ENCODE measurements at regions of chr15 and their contacts with region 1.

Region 1: DNA sequence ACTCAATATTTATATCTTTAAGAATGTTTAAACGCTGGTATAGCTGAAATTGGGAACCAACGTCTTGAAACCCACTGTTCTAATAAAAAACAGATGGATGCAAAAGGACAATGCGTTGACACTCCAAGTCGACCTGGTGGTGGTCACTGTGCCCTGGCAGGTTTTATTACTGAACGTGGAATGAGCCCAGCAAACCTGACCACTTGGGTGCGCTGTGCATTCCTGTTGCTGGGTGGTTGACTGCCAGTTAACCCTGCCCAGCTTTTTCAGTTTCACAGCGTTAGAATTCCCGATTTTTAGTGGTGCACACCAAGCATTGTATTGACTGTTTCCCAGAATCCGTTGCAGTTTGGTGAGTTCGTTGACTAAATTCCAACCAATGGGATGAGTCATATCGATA is 384.4 kb downstream of the OCA2 start:
- DNase-seq: no peak
- H3K4me3 ChIP-seq: no peak overlapping the region
- H3K27ac ChIP-seq: no peak overlapping the region
- H3K4me1 ChIP-seq: no peaks in the 10 kb centered on the region
- H3K27me3 ChIP-seq: no peaks in the 10 kb centered on the region
- CTCF ChIP-seq: no peak
- EP300 ChIP-seq: no peak
- POLR2A ChIP-seq: no peak

Region 2: DNA sequence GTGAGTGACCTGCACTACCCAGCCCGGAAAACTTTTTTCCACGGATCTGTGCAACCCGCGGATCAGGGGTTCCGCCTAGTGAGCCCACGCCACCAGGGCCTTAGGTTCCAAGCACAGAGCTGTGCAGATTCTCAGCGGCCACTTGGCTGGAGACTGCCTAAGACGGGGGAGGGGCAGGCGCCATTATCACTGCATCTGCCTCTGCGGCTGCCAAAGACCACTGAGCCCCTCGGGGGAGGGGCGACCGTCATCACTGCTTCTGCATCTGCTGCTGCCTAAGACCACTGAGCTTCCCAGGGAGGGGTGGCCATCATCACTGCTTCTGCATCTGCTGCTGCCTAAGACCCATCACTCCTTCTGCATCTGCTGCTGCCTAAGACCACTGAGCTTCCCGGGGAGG is 75.7 kb before region 1 on chr15:
- intact Hi-C with region 1: loop called (anchors 10 kb)
- DNase-seq: no peak
- H3K4me3 ChIP-seq: no peak overlapping the region
- H3K27ac ChIP-seq: no peak overlapping the region
- H3K4me1 ChIP-seq: no peaks in the 10 kb centered on the region
- H3K27me3 ChIP-seq: no peaks in the 10 kb centered on the region
- CTCF ChIP-seq: no peak
- EP300 ChIP-seq: no peak
- POLR2A ChIP-seq: no peak

Region 3: GRCh38 chr15:27784107-27784506 is 69.4 kb after region 1 on chr15:
- intact Hi-C with region 1: no loop called
- DNase-seq: peak; percentile 37
- H3K4me3 ChIP-seq: no peak overlapping the region
- H3K27ac ChIP-seq: no peak overlapping the region
- H3K4me1 ChIP-seq: no peaks in the 10 kb centered on the region
- H3K27me3 ChIP-seq: no peaks in the 10 kb centered on the region
- CTCF ChIP-seq: no peak
- EP300 ChIP-seq: no peak
- POLR2A ChIP-seq: no peak

Measured in esophagus muscularis mucosa (tissue), 4 donors.